ENCODE measurements at regions of chrX and their contacts with region 1.

Region 1: GRCh38 chrX:149522916-149523315 is 17.8 kb upstream of the IDS start:
- DNase-seq: no peak
- H3K4me3 ChIP-seq: no peak overlapping the region
- CTCF ChIP-seq: no peak

Region 2: DNA sequence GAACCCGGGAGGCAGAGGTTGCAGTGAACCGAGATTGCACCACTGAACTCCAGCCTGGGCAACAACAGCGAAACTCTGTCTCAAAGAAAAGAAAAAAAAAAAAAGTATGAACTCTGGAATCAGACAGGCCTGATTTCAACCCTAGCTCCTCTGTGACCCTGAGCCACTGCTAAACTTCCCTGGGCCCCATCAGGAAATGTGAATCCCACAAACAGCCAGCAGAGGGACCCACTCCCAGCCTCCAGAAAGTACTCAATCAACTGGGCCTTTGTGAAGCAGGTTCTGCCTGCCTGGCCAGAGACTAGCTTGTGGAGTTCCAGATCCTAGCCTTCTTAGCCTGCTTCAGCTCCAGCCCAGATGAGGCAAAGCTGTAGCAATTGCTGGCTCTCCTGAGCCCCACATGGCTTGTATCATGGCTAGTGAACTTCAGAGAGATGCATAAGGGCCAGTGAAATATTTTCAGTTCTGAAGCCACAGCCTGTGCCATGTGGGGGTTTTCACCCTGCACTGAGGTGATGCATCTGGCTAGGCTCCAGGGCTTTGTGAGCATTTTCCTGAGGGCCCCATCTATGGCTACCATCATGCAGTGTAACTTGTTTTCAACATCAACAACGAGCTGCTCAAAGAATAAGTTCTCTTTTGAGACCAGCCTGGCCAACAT is 10.6 kb before region 1 on chrX:
- CTCF ChIA-PET with region 1: interaction called, 25 read pairs
- POLR2A ChIA-PET with region 1: no interaction called
- DNase-seq: no peak
- H3K4me3 ChIP-seq: no peak overlapping the region
- CTCF ChIP-seq: peak; percentile 63

Region 3: GRCh38 chrX:149699761-149700160 is 176.8 kb after region 1 on chrX:
- CTCF ChIA-PET with region 1: no interaction called
- POLR2A ChIA-PET with region 1: no interaction called
- DNase-seq: no peak
- H3K4me3 ChIP-seq: no peak overlapping the region
- CTCF ChIP-seq: no peak

Region 4: GRCh38 chrX:150942998-150943585 is 1420.2 kb after region 1 on chrX:
- CTCF ChIA-PET with region 1: no interaction called
- POLR2A ChIA-PET with region 1: no interaction called
- DNase-seq: no peak
- H3K4me3 ChIP-seq: no peak overlapping the region
- CTCF ChIP-seq: no peak

Measured in AG04449 (cell line).